ENCODE measurements at regions of chr17 and their contacts with region 1.

Region 1: DNA sequence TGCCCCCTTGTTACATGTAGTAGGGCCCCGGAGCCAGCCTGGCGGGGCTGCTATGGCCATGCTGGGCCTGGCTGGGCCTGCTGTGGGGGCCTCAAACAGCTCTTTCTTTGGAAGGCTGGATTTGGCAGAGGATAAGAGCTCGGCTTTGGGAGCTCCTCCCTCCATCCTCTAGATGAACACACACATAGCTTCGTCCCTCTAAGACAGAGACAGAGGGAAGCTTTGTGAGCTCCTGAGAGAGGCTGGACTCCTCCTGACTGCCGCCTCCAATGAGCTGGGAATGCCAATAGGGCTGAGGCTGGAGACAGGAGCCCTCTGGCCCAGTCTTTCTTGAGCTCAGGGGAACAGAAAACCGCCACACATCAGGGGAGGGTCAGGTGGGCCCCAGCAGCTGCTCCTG is 37.3 kb upstream of the CDC42EP4 start:
- DNase-seq: no peak
- H3K4me3 ChIP-seq: no peak overlapping the region
- H3K27ac ChIP-seq: no peak overlapping the region
- H3K4me1 ChIP-seq: no peaks in the 10 kb centered on the region
- H3K27me3 ChIP-seq: no peaks in the 10 kb centered on the region
- CTCF ChIP-seq: no peak

Region 2: GRCh38 chr17:73267648-73268537 is 81.2 kb before region 1 on chr17:
- CTCF ChIA-PET with region 1: no interaction called
- dilution Hi-C with region 1: loop called (anchors 5 kb)
- in situ Hi-C with region 1: no loop called
- intact Hi-C with region 1: no loop called
- DNase-seq: no peak
- H3K4me3 ChIP-seq: no peak overlapping the region
- H3K27ac ChIP-seq: no peak overlapping the region
- H3K4me1 ChIP-seq: peaks cover 5% of the 10 kb centered on the region
- H3K27me3 ChIP-seq: no peaks in the 10 kb centered on the region
- CTCF ChIP-seq: no peak

Region 3: DNA sequence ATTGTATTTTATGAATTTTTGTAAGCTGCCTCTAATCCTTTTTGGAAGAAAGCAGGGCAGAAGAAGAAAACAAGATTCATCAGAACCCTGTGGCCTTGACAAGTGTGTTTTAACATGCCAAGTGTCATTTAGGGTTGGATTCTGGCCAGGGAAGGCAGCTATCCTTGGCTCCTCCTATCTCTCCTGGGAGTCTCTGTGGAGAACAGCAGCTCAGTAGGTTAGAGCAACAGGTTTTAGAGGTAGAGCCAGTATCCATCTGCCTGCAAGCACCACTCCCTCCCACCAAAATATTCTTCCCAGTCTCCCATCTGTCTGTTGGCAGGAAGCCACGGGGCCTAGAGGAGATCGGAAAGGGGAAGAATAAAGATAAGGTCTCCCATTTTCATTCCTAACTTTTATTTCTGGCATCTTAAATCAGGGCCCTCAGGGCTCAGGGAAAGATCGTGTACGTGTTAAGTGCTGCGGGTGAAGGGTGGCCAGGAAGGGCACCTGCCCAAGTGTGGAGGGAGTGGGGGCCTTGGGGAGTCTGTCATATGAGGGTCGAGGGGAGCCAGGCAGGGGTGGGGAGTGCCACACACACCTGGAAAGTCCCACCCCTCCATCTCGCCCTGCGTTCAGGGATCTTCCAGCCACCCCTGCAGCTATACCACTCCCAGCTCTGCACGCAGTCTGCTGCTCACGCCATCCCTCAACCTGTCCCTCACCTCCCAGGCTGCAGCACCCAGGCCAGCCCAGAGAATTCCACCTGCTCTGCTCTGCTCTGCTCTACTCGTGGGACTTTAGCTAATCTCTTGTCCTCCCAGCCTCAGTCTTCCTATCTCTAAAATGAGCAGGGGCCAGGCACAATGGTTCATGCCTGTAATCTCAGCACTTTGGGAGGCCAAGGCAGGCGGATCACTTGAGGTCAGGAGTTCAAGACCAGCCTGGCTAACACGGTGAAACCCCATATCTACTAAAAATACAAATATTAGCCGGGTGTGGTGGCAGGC is 70.4 kb before region 1 on chr17:
- CTCF ChIA-PET with region 1: no interaction called
- dilution Hi-C with region 1: no loop called
- in situ Hi-C with region 1: no loop called
- intact Hi-C with region 1: no loop called
- DNase-seq: no peak
- H3K4me3 ChIP-seq: no peak overlapping the region
- H3K27ac ChIP-seq: no peak overlapping the region
- H3K4me1 ChIP-seq: peaks cover 8% of the 10 kb centered on the region
- H3K27me3 ChIP-seq: no peaks in the 10 kb centered on the region
- CTCF ChIP-seq: no peak

Region 4: GRCh38 chr17:73998653-73999645 is 649.8 kb after region 1 on chr17:
- CTCF ChIA-PET with region 1: no interaction called
- dilution Hi-C with region 1: no loop called
- in situ Hi-C with region 1: no loop called
- intact Hi-C with region 1: no loop called
- DNase-seq: peak; percentile 22
- H3K4me3 ChIP-seq: no peak overlapping the region
- H3K27ac ChIP-seq: no peak overlapping the region
- H3K4me1 ChIP-seq: no peaks in the 10 kb centered on the region
- H3K27me3 ChIP-seq: no peaks in the 10 kb centered on the region
- CTCF ChIP-seq: peak; percentile 65 to 93

Measured in mammary epithelial cell (primary cell).